PC-9 (cell line): ENCODE measurements at regions of chr18 and their contacts with region 1.

Region 1: DNA sequence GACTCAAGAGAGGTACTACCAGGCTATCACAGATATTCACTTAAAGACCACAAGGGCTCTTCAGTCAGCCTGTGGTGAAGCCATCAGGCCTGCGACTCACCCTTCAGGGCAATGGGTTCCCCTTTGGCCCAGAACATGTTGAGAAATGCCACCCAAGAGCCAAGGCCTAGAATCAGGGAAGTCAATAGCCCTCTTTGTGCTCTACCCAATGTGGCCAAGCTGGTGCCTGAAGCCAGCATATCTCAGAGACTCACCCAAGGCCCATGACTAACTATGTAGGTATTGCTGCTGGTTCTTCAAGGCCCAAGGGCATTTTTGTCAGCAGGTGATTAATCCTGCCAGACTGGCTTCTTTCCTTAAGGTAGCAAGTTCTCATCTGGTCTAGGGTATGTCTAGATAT is 338.9 kb upstream of the SETBP1 start:
- DNase-seq: peak; percentile 67 to 97
- H3K4me3 ChIP-seq: peak overlapping the region; percentile 19; the same call in 1 of the 2 replicates
- H3K27ac ChIP-seq: peak overlapping the region; percentile 85
- H3K4me1 ChIP-seq: peaks cover 40% of the 10 kb centered on the region
- H3K27me3 ChIP-seq: no peaks in the 10 kb centered on the region
- CTCF ChIP-seq: no peak

Region 2: GRCh38 chr18:44180683-44181082 is 161.1 kb before region 1 on chr18:
- CTCF ChIA-PET with region 1: no interaction called
- POLR2A ChIA-PET with region 1: no interaction called
- intact Hi-C with region 1: no loop called
- DNase-seq: no peak
- H3K4me3 ChIP-seq: no peak overlapping the region
- H3K27ac ChIP-seq: no peak overlapping the region
- H3K4me1 ChIP-seq: no peaks in the 10 kb centered on the region
- H3K27me3 ChIP-seq: no peaks in the 10 kb centered on the region
- CTCF ChIP-seq: no peak

Region 3: DNA sequence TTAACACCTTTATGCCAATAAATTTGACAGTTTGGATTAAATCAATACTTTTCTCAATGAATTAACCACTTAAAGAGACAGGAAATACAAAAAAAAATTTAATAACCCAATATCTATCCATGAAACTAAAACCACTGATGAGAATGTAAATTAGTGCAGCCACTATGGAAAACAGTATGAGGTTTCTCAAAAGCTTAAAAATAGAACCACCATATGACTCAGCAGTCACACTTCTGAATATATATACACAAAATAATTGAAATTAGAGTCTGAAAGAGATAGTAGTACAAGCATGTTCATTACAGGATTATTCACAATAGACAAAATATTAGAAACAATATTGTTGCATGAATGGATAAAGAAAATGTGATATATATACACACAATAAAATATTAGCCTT is 43.2 kb before region 1 on chr18:
- CTCF ChIA-PET with region 1: no interaction called
- POLR2A ChIA-PET with region 1: no interaction called
- intact Hi-C with region 1: no loop called
- DNase-seq: no peak
- H3K4me3 ChIP-seq: no peak overlapping the region
- H3K27ac ChIP-seq: no peak overlapping the region
- H3K4me1 ChIP-seq: no peaks in the 10 kb centered on the region
- H3K27me3 ChIP-seq: no peaks in the 10 kb centered on the region
- CTCF ChIP-seq: no peak

Region 4: DNA sequence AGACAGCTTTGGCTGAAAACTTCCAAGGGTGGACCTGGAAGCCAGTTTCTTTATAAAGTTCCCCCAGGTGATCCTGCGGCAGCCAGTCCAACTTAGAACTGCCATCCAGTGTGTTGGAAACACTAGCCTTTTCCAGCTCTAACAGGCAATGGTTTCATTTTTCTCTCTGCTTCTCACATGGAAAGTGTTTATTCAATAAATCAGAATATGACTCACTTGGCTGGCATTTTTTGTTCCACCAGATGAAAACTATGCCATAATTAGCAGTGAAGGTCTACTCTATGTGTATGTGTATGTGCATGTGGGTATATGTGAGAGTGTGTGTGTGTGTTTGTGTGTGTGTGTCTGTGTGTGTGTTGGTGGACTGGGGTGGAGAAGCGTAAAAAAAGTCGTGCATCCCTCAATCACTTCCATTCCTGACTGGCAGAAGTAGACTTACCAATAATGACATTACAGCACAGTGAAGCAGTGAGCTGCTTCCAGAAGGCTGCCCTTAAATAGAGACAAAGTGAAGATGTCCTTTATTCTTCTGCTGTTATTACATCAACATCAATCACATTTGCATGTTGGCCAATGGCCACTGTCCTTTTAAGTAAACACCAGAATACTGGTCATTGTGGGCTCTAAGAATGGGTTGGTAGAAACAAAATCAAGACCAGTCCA is 248.1 kb after region 1 on chr18:
- CTCF ChIA-PET with region 1: no interaction called
- POLR2A ChIA-PET with region 1: no interaction called
- intact Hi-C with region 1: loop called (anchors 2 kb)
- DNase-seq: peak; percentile 15 to 60
- H3K4me3 ChIP-seq: no peak overlapping the region
- H3K27ac ChIP-seq: no peak overlapping the region
- H3K4me1 ChIP-seq: peaks cover 15% of the 10 kb centered on the region
- H3K27me3 ChIP-seq: no peaks in the 10 kb centered on the region
- CTCF ChIP-seq: no peak

Region 5: DNA sequence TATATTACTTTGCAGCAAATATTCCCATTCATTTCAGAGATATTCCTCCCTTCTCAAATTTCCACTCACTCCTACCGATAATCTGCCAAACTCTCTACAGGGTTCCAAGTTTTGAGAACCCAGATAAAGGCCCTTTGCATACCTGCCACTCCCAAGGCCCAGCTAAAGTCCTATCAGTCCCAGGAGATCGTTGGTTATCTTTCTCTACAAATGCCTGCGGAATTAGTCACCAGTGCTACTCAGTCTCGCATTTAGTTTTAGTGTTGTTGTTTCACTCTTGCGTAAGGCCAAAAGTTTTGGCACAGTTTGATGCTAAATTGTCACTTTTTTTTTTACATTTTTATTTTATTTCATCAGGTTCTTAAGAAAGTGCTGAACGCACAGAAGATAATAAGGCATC is 309.7 kb after region 1 on chr18:
- CTCF ChIA-PET with region 1: no interaction called
- POLR2A ChIA-PET with region 1: no interaction called
- intact Hi-C with region 1: loop called (anchors 5 kb)
- DNase-seq: peak; percentile 58 to 92
- H3K4me3 ChIP-seq: no peak overlapping the region
- H3K27ac ChIP-seq: peak overlapping the region; percentile 74
- H3K4me1 ChIP-seq: peaks cover 44% of the 10 kb centered on the region
- H3K27me3 ChIP-seq: no peaks in the 10 kb centered on the region
- CTCF ChIP-seq: no peak

Region 6: DNA sequence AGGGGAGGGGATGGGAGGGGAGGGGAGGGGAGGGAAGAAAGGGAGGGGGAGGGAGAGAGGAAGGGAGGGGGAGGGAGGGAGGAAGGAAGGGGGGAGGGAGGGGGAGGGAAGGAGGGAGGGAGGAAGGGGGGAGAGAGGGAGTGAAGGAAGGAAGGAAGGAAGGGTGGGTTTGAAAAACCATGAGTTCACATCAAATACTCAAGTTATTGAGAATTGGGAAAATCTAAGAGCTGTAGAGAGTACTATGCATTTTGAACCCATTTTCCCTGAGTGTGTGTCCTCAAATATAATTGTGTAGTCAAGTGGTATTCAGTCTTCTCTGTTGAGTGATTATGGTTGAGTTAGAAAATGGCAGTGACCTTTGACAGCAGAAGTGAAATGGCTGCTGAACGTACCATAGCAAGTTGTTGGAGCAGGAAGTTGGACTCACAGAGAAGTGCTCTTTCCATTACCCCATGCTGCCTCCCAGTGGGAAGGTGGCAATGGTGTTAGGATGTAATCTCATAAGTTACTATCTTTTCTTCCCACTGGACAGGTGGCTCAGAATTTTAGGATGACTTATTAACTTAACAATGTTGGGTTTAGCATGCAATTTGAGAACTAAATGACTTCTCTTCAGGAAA is 553.5 kb after region 1 on chr18:
- CTCF ChIA-PET with region 1: no interaction called
- POLR2A ChIA-PET with region 1: no interaction called
- intact Hi-C with region 1: loop called (anchors 5 kb)
- DNase-seq: peak; percentile 30 to 45
- H3K4me3 ChIP-seq: no peak overlapping the region
- H3K27ac ChIP-seq: no peak overlapping the region
- H3K4me1 ChIP-seq: peaks cover 8% of the 10 kb centered on the region; the same call in 1 of the 2 replicates
- H3K27me3 ChIP-seq: no peaks in the 10 kb centered on the region
- CTCF ChIP-seq: peak; percentile 70